Heart right ventricle (tissue), 16 donors: ENCODE measurements at regions of chr19 and their contacts with region 1.

Region 1: GRCh38 chr19:11374433-11375142 is at the start of gene SWSAP1:
- DNase-seq: peak; percentile 98 to 99
- ATAC-seq: peak; percentile 96 to 97 (median 97)
- H3K4me3 ChIP-seq: peak within 1 kb of the TSS; percentile 7 to 80 (median 67)
- H3K27ac ChIP-seq: peak within 1 kb of the TSS; percentile 87 to 97 (median 95)
- H3K4me1 ChIP-seq: peaks cover 3 to 44% (median 30%) of the 10 kb centered on the region in 9 donors
- H3K27me3 ChIP-seq: no peaks in the 10 kb centered on the region
- CTCF ChIP-seq: no peak
- total RNA-seq, gene SWSAP1: 0.53 to 2.1 (median 1.6) TPM

Region 2: GRCh38 chr19:11339254-11340098 is 35.1 kb before region 1 on chr19 and contains the start of gene RAB3D:
- intact Hi-C with region 1: loop called in 1 of 10 experiments (anchors 5 kb)
- DNase-seq: peak; percentile 95 to 96
- ATAC-seq: peak; percentile 93 to 99 (median 97)
- H3K4me3 ChIP-seq: peak within 1 kb of the TSS; percentile 58 to 84 (median 81)
- H3K27ac ChIP-seq: peak within 1 kb of the TSS; percentile 23 to 91 (median 82)
- H3K4me1 ChIP-seq: peaks cover 3 to 45% (median 19%) of the 10 kb centered on the region in 9 donors
- H3K27me3 ChIP-seq: no peaks in the 10 kb centered on the region
- CTCF ChIP-seq: no peak
- total RNA-seq, gene RAB3D: 4.5 to 11.6 (median 6.3) TPM

Region 3: DNA sequence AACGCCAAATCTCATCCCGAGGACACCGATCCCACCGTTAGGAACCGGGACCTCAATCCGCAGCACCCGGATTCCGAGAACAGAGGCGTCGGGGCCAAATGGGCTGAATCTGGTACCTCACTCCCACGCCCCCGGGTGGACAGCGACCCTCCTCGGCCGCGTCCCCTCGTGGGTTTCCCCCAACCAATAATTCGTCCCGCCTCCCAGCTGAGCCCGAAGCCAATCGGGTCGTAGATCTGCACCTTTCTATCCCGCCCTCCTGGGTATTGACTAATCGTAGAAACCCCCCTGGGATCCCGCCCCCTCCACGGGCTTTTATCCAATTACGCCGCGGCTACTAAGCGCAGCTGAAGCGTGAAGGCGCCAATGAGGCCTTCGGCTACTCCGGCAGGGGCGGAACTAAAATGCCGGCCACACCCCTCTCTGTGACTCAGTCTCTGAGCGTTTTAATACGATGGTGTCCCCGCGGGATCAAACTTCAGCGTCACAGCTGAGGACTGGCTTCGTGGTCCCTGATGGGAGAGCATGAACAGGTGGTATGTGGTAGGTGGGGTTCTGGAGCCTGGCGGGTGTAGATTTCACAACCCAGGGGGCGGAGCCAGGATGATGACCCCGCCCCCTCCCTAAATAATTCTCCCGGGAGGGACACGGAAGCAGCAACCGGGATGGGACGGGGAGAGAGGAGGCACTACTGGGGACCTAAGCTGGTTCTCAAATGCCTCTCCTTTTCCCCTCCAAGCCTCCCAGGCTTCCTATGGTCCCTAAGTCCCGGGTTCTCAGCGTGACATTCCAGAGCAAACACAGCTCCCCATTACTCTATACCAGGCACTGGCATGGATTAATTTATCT is 28.3 kb before region 1 on chr19 and contains the starts of genes CCDC159 and TMEM205:
- intact Hi-C with region 1: loop called in 1 of 10 experiments (anchors 1 kb)
- DNase-seq: peak; percentile 97 to 99
- ATAC-seq: peak; percentile 94 to 97 (median 97)
- H3K4me3 ChIP-seq: peak within 1 kb of the TSS; percentile 44 to 92 (median 68)
- H3K27ac ChIP-seq: peak within 1 kb of the TSS; percentile 27 to 90 (median 82)
- H3K4me1 ChIP-seq: peaks cover 6 to 32% (median 25%) of the 10 kb centered on the region in 9 donors
- H3K27me3 ChIP-seq: no peaks in the 10 kb centered on the region
- CTCF ChIP-seq: peak in 4 of 9 donors; percentile 11 to 38 (median 36)
- total RNA-seq, gene CCDC159: 13.4 to 25.5 (median 19.7) TPM
- total RNA-seq, gene TMEM205: 65.1 to 114 (median 83.8) TPM

Region 4: DNA sequence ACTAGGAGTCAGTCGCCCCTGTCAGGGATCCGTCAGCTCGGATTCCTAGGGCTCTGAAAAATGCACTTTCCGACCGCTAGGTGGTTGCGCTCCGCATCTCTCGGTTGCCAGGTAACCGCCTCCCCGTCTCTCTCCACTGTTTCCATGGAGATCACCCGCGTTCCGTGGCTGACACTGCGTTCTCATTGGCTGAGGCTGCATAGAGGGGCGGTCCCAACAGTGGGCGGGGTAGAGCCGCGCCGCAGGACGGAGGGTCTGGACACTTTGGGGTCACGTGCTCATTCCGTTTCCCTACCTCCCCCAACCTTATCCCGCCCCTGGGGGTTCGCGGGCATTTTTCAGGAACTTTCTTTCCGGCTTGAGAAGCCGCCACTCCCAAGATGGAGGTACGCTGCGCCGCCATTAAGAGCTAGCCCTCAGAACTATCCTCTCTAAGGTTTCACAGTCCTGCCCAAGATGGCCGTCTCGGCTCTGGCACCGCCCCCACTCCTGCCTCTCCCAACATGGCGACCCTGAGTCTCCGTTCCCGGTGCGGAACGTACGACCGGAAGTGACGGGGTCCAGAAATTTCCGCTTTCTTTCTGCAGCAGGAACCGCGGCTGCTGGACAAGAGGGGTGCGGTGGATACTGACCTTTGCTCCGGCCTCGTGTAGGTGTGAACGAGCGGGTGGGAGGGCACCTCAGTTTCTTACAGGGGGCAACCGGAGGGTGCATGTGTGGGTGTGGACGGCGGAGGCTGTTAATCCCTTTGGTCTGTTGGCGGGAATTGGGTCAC is 60.7 kb after region 1 on chr19 and contains the starts of genes ODAD3 and PRKCSH:
- intact Hi-C with region 1: loop called in 1 of 10 experiments (anchors 1 kb)
- DNase-seq: peak; percentile 98 to 99
- ATAC-seq: peak; percentile 98 to 99 (median 98)
- H3K4me3 ChIP-seq: peak within 1 kb of the TSS; percentile 50 to 87 (median 78)
- H3K27ac ChIP-seq: peak within 1 kb of the TSS; percentile 53 to 86 (median 80)
- H3K4me1 ChIP-seq: peaks cover 8 to 23% (median 20%) of the 10 kb centered on the region in 9 donors
- H3K27me3 ChIP-seq: no peaks in the 10 kb centered on the region
- CTCF ChIP-seq: peak; percentile 60 to 95 (median 89)
- total RNA-seq, gene ODAD3: 0.17 to 0.64 (median 0.34) TPM in 9 of 10 donors, not detected in the other
- total RNA-seq, gene PRKCSH: 106 to 177 (median 123) TPM

Region 5: GRCh38 chr19:11446652-11447301 is 72.2 kb after region 1 on chr19:
- intact Hi-C with region 1: loop called in 1 of 10 experiments (anchors 5 kb)
- DNase-seq: peak; percentile 39 to 74
- ATAC-seq: peak; percentile 72 to 80 (median 76)
- H3K4me3 ChIP-seq: no peak overlapping the region
- H3K27ac ChIP-seq: no peak overlapping the region
- H3K4me1 ChIP-seq: peaks cover 0 to 20% (median 0%) of the 10 kb centered on the region in 9 donors
- H3K27me3 ChIP-seq: no peaks in the 10 kb centered on the region
- CTCF ChIP-seq: peak; percentile 59 to 81 (median 74)

Region 6: GRCh38 chr19:11587302-11587974 is 212.8 kb after region 1 on chr19:
- intact Hi-C with region 1: loop called in 2 of 10 experiments (anchors 5 to 10 kb)
- DNase-seq: peak; percentile 74 to 81
- ATAC-seq: peak; percentile 78 to 91 (median 86)
- H3K4me3 ChIP-seq: no peak overlapping the region
- H3K27ac ChIP-seq: no peak overlapping the region
- H3K4me1 ChIP-seq: peaks cover 0 to 18% (median 0%) of the 10 kb centered on the region in 9 donors
- H3K27me3 ChIP-seq: no peaks in the 10 kb centered on the region
- CTCF ChIP-seq: peak; percentile 75 to 91 (median 83)

Region 7: GRCh38 chr19:11597202-11598102 is 222.9 kb after region 1 on chr19 and contains the start of gene ZNF627:
- intact Hi-C with region 1: loop called in 1 of 10 experiments (anchors 10 kb)
- DNase-seq: peak; percentile 98 to 100
- ATAC-seq: peak; percentile 99 to 100 (median 100)
- H3K4me3 ChIP-seq: peak within 1 kb of the TSS; percentile 78 to 100 (median 92)
- H3K27ac ChIP-seq: peak within 1 kb of the TSS; percentile 86 to 98 (median 92)
- H3K4me1 ChIP-seq: peaks cover 4 to 34% (median 19%) of the 10 kb centered on the region in 9 donors
- H3K27me3 ChIP-seq: no peaks in the 10 kb centered on the region
- CTCF ChIP-seq: peak in 6 of 9 donors; percentile 16 to 42 (median 32)
- total RNA-seq, gene ZNF627: 5.3 to 9.8 (median 6.7) TPM